Spleen (tissue), 13 donors: ENCODE measurements at regions of chr11 and their contacts with region 1.

Region 1: DNA sequence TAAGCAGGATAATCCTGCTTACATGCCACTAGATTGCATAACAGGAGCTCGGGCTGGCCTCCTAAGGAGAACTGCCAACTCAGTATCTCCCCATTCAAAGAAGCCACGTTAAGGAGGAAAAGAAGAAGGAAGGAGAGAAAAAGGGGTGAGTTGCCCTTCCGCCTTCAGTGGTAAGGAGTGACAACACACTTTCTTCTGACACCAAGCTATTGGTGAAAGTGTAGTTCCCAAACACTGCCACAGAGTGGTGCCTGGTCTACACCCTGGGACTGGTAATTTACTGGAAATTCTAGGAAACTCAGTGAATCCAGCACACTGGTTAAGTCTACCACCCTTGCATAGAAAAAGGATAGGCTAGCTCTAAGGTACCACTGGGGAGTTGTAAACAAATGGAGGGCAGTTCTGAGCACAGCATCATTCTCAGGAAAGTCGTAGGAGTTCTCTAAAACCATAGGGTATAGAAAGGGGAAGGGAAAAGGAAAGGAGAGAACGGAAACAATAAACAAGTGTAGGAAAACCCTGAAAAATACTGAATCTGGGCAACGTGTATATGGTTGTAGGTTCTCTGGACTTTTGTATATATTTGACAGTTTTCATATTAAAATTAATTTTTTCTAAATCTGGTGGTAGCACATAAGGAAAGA is 58.2 kb downstream of the RRAS2 start:
- DNase-seq: no peak
- H3K4me3 ChIP-seq: no peak overlapping the region
- H3K27ac ChIP-seq: no peak overlapping the region
- H3K4me1 ChIP-seq: peaks cover 11 to 81% (median 28%) of the 10 kb centered on the region in 6 donors
- H3K27me3 ChIP-seq: no peaks in the 10 kb centered on the region
- CTCF ChIP-seq: peak; percentile 36 to 85 (median 78)
- POLR2A ChIP-seq: no peak

Region 2: DNA sequence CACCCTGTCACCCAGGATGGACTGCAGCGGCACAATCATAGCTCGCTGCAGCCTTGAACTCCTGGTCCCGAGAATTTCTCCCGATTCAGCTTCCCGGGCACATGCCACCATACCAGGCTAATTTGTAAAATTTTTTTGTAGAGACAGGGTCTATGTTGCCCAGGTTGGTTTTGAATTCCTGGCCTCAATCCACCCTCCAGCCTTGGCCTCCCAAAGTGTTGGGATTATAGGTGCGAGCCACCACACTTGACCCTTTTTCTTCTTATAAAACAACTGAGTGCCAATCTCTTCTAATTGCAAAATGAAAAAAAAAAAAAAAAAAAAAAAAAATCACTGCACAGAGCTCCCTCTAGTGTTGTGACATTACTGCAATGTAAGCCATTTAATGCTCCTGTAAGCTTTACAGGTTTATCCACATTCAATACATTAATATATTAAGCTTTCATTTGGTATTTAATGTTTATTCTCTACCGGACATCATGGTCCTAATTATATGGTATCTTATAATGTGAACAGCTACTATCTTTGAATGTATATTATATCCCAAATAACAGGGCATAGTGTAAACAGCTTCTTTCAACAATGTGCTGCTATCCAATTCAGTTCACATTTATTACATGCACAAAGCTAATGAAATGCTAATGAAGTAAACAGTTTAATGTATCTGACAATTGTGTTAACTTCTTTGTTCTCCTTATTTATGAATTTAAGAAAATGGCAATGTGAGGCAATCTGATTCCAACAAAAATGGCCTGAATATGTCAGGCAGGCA is 154.3 kb after region 1 on chr11:
- intact Hi-C with region 1: loop called (anchors 5 kb)
- DNase-seq: no peak
- H3K4me3 ChIP-seq: no peak overlapping the region
- H3K27ac ChIP-seq: peak overlapping the region in 1 of 8 donors; percentile 8
- H3K4me1 ChIP-seq: peaks cover 0 to 16% (median 6%) of the 10 kb centered on the region in 6 donors
- H3K27me3 ChIP-seq: no peaks in the 10 kb centered on the region
- CTCF ChIP-seq: peak in 10 of 11 experiments; percentile 29 to 67 (median 55)
- POLR2A ChIP-seq: no peak